ENCODE measurements at regions of chr2 and their contacts with region 1.

Region 1: DNA sequence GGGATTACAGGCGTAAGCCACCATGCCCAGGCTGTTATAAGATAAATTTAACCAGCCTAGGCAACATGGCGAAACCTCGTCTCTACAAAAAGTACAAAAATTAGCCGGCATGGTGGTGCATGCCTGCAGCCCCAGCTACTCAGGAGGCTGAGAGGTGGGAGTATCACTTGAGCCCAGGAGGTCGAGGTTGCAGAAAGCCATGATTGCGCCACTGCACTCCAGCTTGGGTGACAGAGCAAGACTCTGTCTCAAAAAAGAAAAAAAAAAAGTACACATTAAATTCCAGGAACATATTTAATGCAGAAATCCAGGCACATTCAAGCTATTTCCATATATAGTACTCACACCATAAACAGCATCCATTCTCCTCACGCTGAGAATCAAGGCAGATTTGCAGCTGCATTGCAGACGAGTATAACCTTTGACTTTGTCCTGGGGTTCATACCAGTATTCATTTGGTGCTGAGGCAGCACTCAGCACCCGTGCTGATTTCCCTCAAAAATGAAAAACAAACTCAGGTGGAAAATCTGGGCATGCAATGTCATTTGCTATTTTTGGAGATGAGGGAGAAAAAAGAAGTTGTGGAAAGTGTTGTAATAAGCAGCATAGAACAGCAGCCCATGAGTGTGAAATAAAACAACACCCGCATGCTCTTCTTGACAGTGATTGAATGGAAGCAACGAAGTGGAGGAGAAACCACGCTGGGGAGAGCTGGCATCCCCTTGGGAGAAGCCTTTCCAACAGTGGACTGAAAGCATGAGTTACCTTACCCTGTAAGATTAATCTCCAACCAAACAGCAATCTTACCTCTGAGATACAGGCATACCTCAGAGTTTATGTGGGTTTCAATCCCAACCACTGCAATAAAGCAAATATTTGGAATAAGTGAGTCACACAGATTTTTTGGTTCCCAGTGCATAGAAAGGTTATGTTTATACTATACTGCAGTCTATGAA is 46.8 kb upstream of the ANXA4 start:
- DNase-seq: no peak
- ATAC-seq: no peak
- H3K4me3 ChIP-seq: no peak overlapping the region
- H3K4me3 Mint-ChIP-seq: peak overlapping the region; percentile 8
- H3K27ac ChIP-seq: no peak overlapping the region
- H3K27ac Mint-ChIP-seq: peak overlapping the region; percentile 90
- H3K4me1 ChIP-seq: peaks cover 86% of the 10 kb centered on the region
- H3K4me1 Mint-ChIP-seq: peaks cover 97% of the 10 kb centered on the region
- H3K27me3 ChIP-seq: no peaks in the 10 kb centered on the region
- H3K27me3 Mint-ChIP-seq: no peaks in the 10 kb centered on the region
- CTCF ChIP-seq: no peak

Region 2: GRCh38 chr2:69397234-69397633 is 297.9 kb before region 1 on chr2:
- CTCF ChIA-PET with region 1: no interaction called
- POLR2A ChIA-PET with region 1: no interaction called
- intact Hi-C with region 1: no loop called
- DNase-seq: no peak
- ATAC-seq: no peak
- H3K4me3 ChIP-seq: no peak overlapping the region
- H3K4me3 Mint-ChIP-seq: no peak overlapping the region
- H3K27ac ChIP-seq: no peak overlapping the region
- H3K27ac Mint-ChIP-seq: no peak overlapping the region
- H3K4me1 ChIP-seq: no peaks in the 10 kb centered on the region
- H3K4me1 Mint-ChIP-seq: no peaks in the 10 kb centered on the region
- H3K27me3 ChIP-seq: no peaks in the 10 kb centered on the region
- H3K27me3 Mint-ChIP-seq: no peaks in the 10 kb centered on the region
- CTCF ChIP-seq: no peak

Region 3: GRCh38 chr2:69652221-69652651 is 42.9 kb before region 1 on chr2:
- CTCF ChIA-PET with region 1: no interaction called
- POLR2A ChIA-PET with region 1: interaction called, 214 read pairs
- intact Hi-C with region 1: loop called in 1 of 2 experiments (anchors 2 kb)
- DNase-seq: peak in 1 of 14 experiments; percentile 16
- ATAC-seq: no peak
- H3K4me3 ChIP-seq: no peak overlapping the region
- H3K4me3 Mint-ChIP-seq: peak overlapping the region; percentile 27
- H3K27ac ChIP-seq: no peak overlapping the region
- H3K27ac Mint-ChIP-seq: peak overlapping the region; percentile 70
- H3K4me1 ChIP-seq: peaks cover 50% of the 10 kb centered on the region
- H3K4me1 Mint-ChIP-seq: peaks cover 63% of the 10 kb centered on the region
- H3K27me3 ChIP-seq: no peaks in the 10 kb centered on the region
- H3K27me3 Mint-ChIP-seq: no peaks in the 10 kb centered on the region
- CTCF ChIP-seq: no peak

Region 4: DNA sequence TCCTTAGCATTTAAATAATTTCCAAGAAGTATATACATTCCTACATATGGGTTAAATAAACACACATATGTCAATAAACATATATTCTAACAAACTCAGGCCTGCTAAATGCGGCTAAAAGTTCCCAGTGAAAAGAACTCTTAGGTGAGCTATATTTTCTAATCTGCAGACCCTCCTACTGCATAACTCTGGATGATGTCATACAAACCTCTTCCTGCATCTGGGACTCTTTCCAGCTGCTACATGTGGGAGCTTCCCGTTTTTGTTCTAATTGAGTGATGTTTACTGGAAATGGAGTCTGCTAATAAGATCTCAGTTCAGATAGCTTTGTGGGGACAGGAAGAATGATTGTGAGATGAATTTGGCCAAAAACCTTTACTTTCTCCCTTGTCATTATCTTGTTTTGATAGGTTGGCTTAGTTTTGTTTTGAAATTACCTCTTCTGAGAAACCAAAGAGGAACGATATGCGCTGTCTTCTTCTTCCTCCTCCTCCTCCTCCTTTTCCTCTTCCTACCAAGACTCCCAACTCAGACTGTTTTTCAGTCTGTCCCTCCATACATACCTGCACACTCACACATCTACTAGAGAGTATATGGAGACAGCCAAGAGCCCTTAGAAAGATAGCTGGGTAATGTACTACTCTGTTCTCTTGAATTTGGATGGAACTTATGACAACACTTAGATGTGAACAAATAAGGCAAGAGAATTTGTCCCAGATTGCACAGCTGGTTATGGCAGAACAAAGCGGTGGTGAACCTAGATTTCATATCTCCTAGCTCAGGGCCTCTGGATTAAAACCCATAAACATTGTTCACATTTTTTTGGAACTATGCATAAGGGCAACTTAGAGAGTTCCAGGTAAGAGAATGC is 11.8 kb before region 1 on chr2:
- CTCF ChIA-PET with region 1: interaction called, 3 read pairs
- POLR2A ChIA-PET with region 1: interaction called, 18 read pairs
- intact Hi-C with region 1: no loop called
- DNase-seq: no peak
- ATAC-seq: no peak
- H3K4me3 ChIP-seq: no peak overlapping the region
- H3K4me3 Mint-ChIP-seq: peak overlapping the region; percentile 42
- H3K27ac ChIP-seq: no peak overlapping the region
- H3K27ac Mint-ChIP-seq: peak overlapping the region; percentile 70
- H3K4me1 ChIP-seq: peaks cover 12% of the 10 kb centered on the region
- H3K4me1 Mint-ChIP-seq: peaks cover 73% of the 10 kb centered on the region
- H3K27me3 ChIP-seq: no peaks in the 10 kb centered on the region
- H3K27me3 Mint-ChIP-seq: no peaks in the 10 kb centered on the region
- CTCF ChIP-seq: no peak

Region 5: GRCh38 chr2:69717861-69718273 is 22.7 kb after region 1 on chr2:
- CTCF ChIA-PET with region 1: interaction called, 3 read pairs
- POLR2A ChIA-PET with region 1: no interaction called
- intact Hi-C with region 1: loop called in 1 of 2 experiments (anchors 2 kb)
- DNase-seq: no peak
- ATAC-seq: no peak
- H3K4me3 ChIP-seq: no peak overlapping the region
- H3K4me3 Mint-ChIP-seq: no peak overlapping the region
- H3K27ac ChIP-seq: no peak overlapping the region
- H3K27ac Mint-ChIP-seq: no peak overlapping the region
- H3K4me1 ChIP-seq: peaks cover 13% of the 10 kb centered on the region
- H3K4me1 Mint-ChIP-seq: peaks cover 17% of the 10 kb centered on the region
- H3K27me3 ChIP-seq: no peaks in the 10 kb centered on the region
- H3K27me3 Mint-ChIP-seq: no peaks in the 10 kb centered on the region
- CTCF ChIP-seq: no peak